ENCODE measurements at regions of chr2 and their contacts with region 1.

Region 1: GRCh38 chr2:63977904-63978303 is 41.3 kb downstream of the VPS54 start:
- DNase-seq: no peak
- H3K4me3 ChIP-seq: no peak overlapping the region
- H3K27me3 ChIP-seq: no peaks in the 10 kb centered on the region
- CTCF ChIP-seq: no peak

Region 2: GRCh38 chr2:63942788-63943187 is 35.1 kb before region 1 on chr2:
- CTCF ChIA-PET with region 1: no interaction called
- POLR2A ChIA-PET with region 1: interaction called, 10 read pairs
- DNase-seq: no peak
- H3K4me3 ChIP-seq: no peak overlapping the region
- H3K27me3 ChIP-seq: no peaks in the 10 kb centered on the region
- CTCF ChIP-seq: no peak